Activated CD4-positive, alpha-beta T cell treated with anti-CD3 and anti-CD28 coated beads for 36 hours (primary cell): ENCODE measurements at regions of chr11 and their contacts with region 1.

Region 1: DNA sequence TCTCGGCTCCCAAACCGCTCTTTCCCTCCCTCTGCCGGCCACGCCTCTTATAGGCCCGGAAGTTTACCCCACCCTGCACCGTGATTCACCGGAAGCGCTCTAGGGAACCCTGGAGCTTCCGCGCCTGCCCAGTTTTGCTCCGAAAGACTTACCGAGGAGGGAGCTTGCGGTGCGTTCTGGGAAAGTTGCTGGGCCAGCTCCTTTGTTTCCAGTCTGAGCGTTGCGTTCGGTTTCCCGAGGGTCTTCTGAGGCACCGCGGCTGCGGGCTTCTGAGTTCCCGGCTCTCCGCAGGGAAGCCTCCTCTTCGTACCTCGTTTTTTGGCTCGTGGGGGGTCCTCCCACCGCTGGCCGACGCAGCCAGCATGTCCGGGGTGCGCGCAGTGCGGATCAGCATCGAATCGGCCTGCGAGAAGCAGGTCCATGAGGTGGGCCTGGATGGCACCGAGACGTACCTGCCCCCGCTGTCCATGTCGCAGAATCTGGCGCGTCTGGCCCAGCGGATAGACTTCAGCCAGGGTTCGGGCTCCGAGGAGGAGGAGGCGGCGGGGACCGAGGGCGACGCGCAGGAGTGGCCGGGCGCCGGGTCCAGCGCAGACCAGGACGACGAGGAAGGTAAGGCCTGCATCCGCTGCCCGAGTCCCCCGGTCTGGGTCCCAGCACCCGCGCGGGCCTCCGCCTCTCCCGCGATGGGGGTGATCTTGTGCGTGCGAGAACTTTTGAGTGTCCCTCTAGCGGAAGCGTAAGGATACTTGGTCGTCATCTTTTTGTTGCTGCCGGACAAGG is at the start of gene MED17:
- DNase-seq: peak; percentile 95
- ATAC-seq: peak; percentile 97
- H3K4me3 Mint-ChIP-seq: peak within 1 kb of the TSS; percentile 89
- H3K27ac Mint-ChIP-seq: peak within 1 kb of the TSS; percentile 99
- H3K4me1 Mint-ChIP-seq: peaks cover 42% of the 10 kb centered on the region
- H3K27me3 Mint-ChIP-seq: no peaks in the 10 kb centered on the region
- total RNA-seq, gene MED17: 28.6 to 29.9 TPM

Region 2: DNA sequence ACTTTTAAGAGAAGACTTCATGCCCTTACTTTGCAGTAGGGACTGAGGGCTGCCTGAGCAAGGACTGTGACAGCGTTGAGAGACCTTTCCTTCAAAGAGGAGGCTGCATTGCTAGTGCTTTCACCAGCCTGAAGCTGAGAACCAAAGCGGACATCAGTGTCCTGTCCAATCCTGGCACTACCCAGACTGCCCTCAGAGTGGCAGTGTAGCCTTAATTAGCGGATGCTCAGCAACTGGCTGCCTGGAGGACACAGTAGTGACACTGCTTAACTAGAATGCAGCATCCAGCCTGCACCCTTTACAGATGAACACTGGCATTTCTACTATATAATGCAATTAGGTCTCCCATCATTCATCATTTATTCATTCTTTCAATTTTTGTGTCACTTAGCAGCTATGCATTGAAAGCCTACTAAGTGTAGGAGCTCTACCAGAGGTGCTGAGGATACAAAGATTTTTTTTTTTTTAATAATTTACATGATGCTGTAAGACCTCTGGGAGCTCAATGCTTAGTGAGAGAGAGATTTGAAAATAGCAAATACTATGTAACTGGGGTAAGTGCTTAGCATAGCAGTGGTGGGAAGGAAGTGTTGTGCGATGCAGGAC is 549.6 kb before region 1 on chr11:
- CTCF ChIA-PET with region 1: no interaction called
- POLR2A ChIA-PET with region 1: no interaction called
- intact Hi-C with region 1: loop called in 1 of 2 experiments (anchors 10 kb)
- DNase-seq: peak; percentile 82
- ATAC-seq: peak; percentile 99
- H3K4me3 Mint-ChIP-seq: no peak overlapping the region
- H3K27ac Mint-ChIP-seq: no peak overlapping the region
- H3K4me1 Mint-ChIP-seq: no peaks in the 10 kb centered on the region
- H3K27me3 Mint-ChIP-seq: peaks cover 9% of the 10 kb centered on the region

Region 3: GRCh38 chr11:93689240-93689639 is 95.1 kb before region 1 on chr11:
- CTCF ChIA-PET with region 1: no interaction called
- POLR2A ChIA-PET with region 1: no interaction called
- intact Hi-C with region 1: loop called in 1 of 2 experiments (anchors 1 kb)
- DNase-seq: peak; percentile 74
- ATAC-seq: peak; percentile 99
- H3K4me3 Mint-ChIP-seq: peak overlapping the region; percentile 44
- H3K27ac Mint-ChIP-seq: peak overlapping the region; percentile 90
- H3K4me1 Mint-ChIP-seq: peaks cover 22% of the 10 kb centered on the region
- H3K27me3 Mint-ChIP-seq: no peaks in the 10 kb centered on the region

Region 4: DNA sequence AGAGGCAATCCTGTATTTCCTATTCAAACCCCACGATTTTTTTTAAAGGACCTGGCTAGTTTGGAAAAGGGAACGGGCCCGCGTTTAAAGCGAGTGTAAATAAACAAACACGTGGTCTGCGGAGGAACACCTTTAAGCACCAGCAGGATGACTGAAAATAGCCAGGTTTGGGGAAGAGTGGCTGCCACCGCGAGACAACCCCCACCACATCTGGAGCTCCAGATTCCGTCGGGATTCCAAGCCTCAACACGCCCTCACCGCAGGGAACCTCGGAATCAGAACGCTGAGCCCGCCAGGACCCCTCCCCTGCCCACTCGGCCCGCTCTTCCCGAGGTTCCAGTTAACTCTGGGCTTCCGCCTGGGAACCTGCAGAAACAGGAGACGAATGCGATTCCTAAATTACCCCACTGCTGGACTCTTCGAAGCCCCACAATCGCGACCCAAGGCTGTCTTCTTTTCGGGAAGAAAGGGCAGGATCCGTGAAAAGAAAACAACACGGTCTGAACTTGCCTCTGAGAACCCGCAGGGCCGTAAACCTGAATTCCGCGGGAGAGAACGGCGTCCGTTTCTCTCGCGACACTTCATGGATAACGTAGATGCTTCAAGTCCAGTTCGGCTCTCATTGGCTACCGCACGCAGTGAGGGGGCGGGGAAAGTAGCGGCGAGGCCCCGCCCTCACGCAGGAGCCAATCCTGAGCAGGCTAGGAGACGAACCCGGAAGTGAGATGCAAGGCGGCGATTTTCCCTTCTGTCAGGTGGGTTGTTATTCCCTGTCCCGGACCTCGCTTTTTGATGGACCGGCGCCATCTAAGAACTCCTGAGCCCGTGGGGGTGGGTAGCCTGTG is 709.2 kb after region 1 on chr11 and contains the starts of genes ANKRD49 and MRE11:
- CTCF ChIA-PET with region 1: interaction called, 4 read pairs
- POLR2A ChIA-PET with region 1: no interaction called
- intact Hi-C with region 1: loop called (anchors 1 to 10 kb)
- DNase-seq: peak; percentile 97
- ATAC-seq: peak; percentile 100
- H3K4me3 Mint-ChIP-seq: peak within 1 kb of the TSS; percentile 94
- H3K27ac Mint-ChIP-seq: peak within 1 kb of the TSS; percentile 97
- H3K4me1 Mint-ChIP-seq: peaks cover 24% of the 10 kb centered on the region
- H3K27me3 Mint-ChIP-seq: no peaks in the 10 kb centered on the region
- total RNA-seq, gene ANKRD49: 20.8 to 22.4 TPM
- total RNA-seq, gene MRE11: 36.8 to 51.3 TPM